ENCODE measurements at regions of chr17 and their contacts with region 1.

Region 1: GRCh38 chr17:75295201-75296158 is 6.2 kb upstream of the SLC25A19 start:
- DNase-seq: peak; percentile 85 to 92 (median 90)
- H3K4me3 ChIP-seq: peak overlapping the region in 1 of 3 experiments; percentile 10
- H3K4me3 Mint-ChIP-seq: peak overlapping the region; percentile 62 to 76
- H3K27ac ChIP-seq: peak overlapping the region; percentile 87 to 98
- H3K27ac Mint-ChIP-seq: peak overlapping the region; percentile 97 to 100 (median 100)
- H3K4me1 ChIP-seq: peaks cover 85 to 89% of the 10 kb centered on the region in 2 donors
- H3K4me1 Mint-ChIP-seq: peaks cover 64% of the 10 kb centered on the region
- H3K27me3 ChIP-seq: no peaks in the 10 kb centered on the region
- H3K27me3 Mint-ChIP-seq: no peaks in the 10 kb centered on the region
- CTCF ChIP-seq: peak; percentile 16

Region 2: DNA sequence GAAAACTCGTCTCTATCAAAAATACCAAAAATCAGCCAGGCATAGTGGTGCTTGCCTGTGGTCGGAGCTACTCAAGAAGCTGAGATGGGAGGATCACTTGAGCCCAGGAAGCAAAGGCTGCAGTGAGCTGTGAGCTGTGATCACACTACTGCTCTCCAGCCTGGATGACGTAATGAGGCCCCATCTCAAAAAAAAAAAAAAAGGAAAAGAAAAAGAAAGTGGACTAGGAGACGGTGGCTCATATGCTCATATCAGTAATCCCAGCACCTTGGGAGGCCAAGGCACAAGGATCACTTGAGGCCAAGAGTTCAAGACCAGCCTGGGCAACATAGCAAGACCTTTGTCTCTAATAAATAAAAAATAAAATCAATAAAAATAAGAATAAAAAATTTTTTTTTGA is 103.9 kb before region 1 on chr17:
- intact Hi-C with region 1: no loop called
- DNase-seq: peak in 2 of 3 donors; percentile 15 to 20
- H3K4me3 ChIP-seq: no peak overlapping the region
- H3K4me3 Mint-ChIP-seq: no peak overlapping the region
- H3K27ac ChIP-seq: no peak overlapping the region
- H3K27ac Mint-ChIP-seq: no peak overlapping the region
- H3K4me1 ChIP-seq: no peaks in the 10 kb centered on the region
- H3K4me1 Mint-ChIP-seq: peaks cover 9% of the 10 kb centered on the region
- H3K27me3 ChIP-seq: no peaks in the 10 kb centered on the region
- H3K27me3 Mint-ChIP-seq: peaks cover 2 to 3% (median 2%) of the 10 kb centered on the region in 3 donors
- CTCF ChIP-seq: no peak

Region 3: DNA sequence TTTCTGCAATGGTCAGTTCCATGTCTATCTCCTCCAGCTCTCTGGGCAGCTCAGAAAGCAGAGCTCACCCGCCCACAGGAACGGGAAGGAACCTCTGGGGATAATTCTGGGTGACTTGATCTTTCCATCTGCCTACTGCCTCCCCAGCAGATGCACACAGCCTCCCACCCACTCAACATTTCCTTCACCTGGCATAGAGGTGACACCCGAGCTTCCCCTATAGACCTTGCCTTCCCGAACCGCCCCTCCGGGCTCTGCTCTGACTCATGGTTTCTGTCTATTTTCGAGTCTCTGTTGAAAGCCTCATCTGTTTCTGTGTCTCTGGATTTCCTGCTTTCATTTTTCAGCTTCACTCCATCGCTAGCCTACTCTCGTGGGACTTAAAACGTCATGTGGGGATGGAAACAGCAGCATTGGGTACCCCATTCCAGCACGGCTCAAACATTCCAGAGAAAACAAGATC is 45.4 kb before region 1 on chr17:
- intact Hi-C with region 1: no loop called
- DNase-seq: peak in 2 of 3 donors; percentile 42 to 54
- H3K4me3 ChIP-seq: no peak overlapping the region
- H3K4me3 Mint-ChIP-seq: peak overlapping the region; percentile 59 to 75
- H3K27ac ChIP-seq: peak overlapping the region; percentile 45 to 49
- H3K27ac Mint-ChIP-seq: peak overlapping the region; percentile 74 to 89 (median 79)
- H3K4me1 ChIP-seq: peaks cover 35 to 47% of the 10 kb centered on the region in 2 donors
- H3K4me1 Mint-ChIP-seq: peaks cover 67% of the 10 kb centered on the region
- H3K27me3 ChIP-seq: no peaks in the 10 kb centered on the region
- H3K27me3 Mint-ChIP-seq: no peaks in the 10 kb centered on the region
- CTCF ChIP-seq: no peak

Region 4: GRCh38 chr17:75261336-75262111 is 34.0 kb before region 1 on chr17 and contains the starts of genes GGA3 and MRPS7:
- intact Hi-C with region 1: no loop called
- DNase-seq: peak; percentile 88 to 92 (median 91)
- H3K4me3 ChIP-seq: peak within 1 kb of the TSS; percentile 81 to 97 (median 89)
- H3K4me3 Mint-ChIP-seq: peak within 1 kb of the TSS; percentile 98 to 99
- H3K27ac ChIP-seq: peak within 1 kb of the TSS; percentile 90 to 99
- H3K27ac Mint-ChIP-seq: peak within 1 kb of the TSS; percentile 98 to 100 (median 99)
- H3K4me1 ChIP-seq: peaks cover 43 to 50% of the 10 kb centered on the region in 2 donors
- H3K4me1 Mint-ChIP-seq: peaks cover 64% of the 10 kb centered on the region
- H3K27me3 ChIP-seq: no peaks in the 10 kb centered on the region
- H3K27me3 Mint-ChIP-seq: peaks cover 0 to 2% (median 0%) of the 10 kb centered on the region in 3 donors
- CTCF ChIP-seq: no peak
- polyA plus RNA-seq, gene GGA3: 4.3 to 162 (median 15.7) TPM
- polyA plus RNA-seq, gene MRPS7: 26.7 to 122 (median 101) TPM

Region 5: GRCh38 chr17:75313941-75314551 is 18.6 kb after region 1 on chr17:
- intact Hi-C with region 1: loop called in 1 of 2 experiments (anchors 2 kb)
- DNase-seq: peak; percentile 95 to 98 (median 98)
- H3K4me3 ChIP-seq: no peak overlapping the region
- H3K4me3 Mint-ChIP-seq: peak overlapping the region in 1 of 2 donors; percentile 31
- H3K27ac ChIP-seq: peak overlapping the region; percentile 98 to 100
- H3K27ac Mint-ChIP-seq: peak overlapping the region; percentile 97 to 99 (median 98)
- H3K4me1 ChIP-seq: peaks cover 99 to 100% of the 10 kb centered on the region in 2 donors
- H3K4me1 Mint-ChIP-seq: peaks cover 91% of the 10 kb centered on the region
- H3K27me3 ChIP-seq: no peaks in the 10 kb centered on the region
- H3K27me3 Mint-ChIP-seq: peaks cover 0 to 14% (median 0%) of the 10 kb centered on the region in 3 donors
- CTCF ChIP-seq: no peak